Activated T-helper 1 cell treated with anti-CD3 and anti-CD28 coated beads, Interleukin-12 subunit alpha, Interleukin-12 subunit beta, Interleukin-2, Interleukin-4 antibody, amounts not matched to agents 30 ng/mL and 10 ng/mL and 1 ng/mL, durations not matched to agents 14 hours and 24 hours and 36 hours (primary cell): ENCODE measurements at regions of chr2 and their contacts with region 1.

Region 1: DNA sequence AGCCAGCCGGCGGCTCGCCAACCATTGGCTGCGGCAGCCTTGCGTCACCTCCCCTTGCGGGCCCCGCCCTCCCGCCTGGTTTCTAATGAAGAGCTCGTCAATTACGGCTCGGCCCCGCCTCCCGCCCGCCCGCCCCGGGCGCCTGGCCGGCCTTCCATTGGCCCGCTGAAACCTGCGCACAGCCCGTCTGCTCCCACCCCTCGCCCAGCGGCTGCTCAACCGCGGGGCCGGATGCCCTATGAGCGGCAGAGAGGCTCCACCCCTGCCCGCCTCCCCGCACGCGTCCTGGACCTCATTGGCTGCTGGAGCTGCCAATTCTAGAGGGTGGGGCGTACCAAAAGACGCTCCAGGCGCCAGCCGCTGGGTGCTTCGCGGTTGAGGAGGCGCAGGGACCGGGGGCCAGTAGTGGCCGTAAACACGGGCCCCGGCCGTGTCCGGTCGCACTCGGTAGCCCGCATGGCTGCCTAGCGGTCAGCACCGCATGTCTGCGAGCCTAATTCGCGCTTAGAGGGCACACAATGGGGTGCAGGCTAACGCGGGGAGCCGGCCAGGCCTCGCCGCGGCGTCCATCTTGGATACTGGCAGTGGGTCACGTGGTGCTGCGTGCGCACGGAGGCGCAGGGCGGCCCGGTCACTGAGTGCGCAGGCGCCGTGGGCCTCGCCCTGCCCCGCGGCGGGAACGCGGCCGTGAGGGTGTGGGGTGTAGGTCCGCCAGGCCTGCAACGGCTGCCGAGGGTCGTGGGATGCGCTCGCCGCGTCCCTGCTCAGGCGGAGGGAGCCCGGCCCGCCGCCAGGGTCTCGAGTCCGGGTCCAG is 454 bp upstream of the HDAC4 start:
- DNase-seq: peak; percentile 99
- H3K4me3 Mint-ChIP-seq: peak overlapping the region; percentile 94
- H3K27ac Mint-ChIP-seq: peak overlapping the region; percentile 99
- H3K4me1 Mint-ChIP-seq: peaks cover 40% of the 10 kb centered on the region
- H3K27me3 Mint-ChIP-seq: peaks cover 17% of the 10 kb centered on the region

Region 2: GRCh38 chr2:239143858-239144718 is 257.2 kb before region 1 on chr2:
- intact Hi-C with region 1: loop called (anchors 1 kb)
- DNase-seq: no peak
- H3K4me3 Mint-ChIP-seq: no peak overlapping the region
- H3K27ac Mint-ChIP-seq: no peak overlapping the region
- H3K4me1 Mint-ChIP-seq: peaks cover 7% of the 10 kb centered on the region
- H3K27me3 Mint-ChIP-seq: no peaks in the 10 kb centered on the region

Region 3: DNA sequence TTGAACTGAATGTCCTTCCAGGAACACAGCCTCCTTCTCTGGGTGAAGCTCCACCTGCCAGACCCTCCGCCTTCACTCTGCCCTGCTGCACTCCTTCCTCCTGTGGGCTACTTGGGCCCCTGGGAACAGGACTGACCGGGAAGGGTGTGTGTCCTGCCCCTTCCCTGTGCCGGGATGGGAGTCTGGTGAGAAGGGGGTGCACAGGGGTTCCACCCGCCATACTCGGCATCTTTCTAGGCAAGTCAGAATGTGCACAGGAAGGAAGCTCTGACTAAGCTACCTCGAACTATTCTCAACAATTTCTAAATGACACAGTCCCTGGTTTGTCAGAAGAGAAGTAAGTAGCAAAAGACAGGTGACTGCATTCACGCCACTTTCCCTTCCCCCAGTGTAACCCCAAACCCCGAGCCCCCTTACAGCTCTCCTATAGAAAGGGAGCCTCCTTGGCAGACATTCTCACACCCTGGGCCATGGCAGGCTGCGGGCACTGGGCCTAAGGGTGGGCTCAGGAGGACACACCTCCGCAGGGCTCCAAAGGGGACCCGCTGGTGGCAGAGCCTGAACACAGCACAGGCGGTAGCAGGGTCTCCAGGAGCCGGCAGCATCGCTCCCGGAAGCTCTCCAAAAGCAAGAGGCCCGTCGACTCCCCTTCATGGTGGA is 184.5 kb before region 1 on chr2:
- intact Hi-C with region 1: loop called (anchors 2 kb)
- DNase-seq: peak; percentile 34
- H3K4me3 Mint-ChIP-seq: peak overlapping the region; percentile 76
- H3K27ac Mint-ChIP-seq: peak overlapping the region; percentile 69
- H3K4me1 Mint-ChIP-seq: peaks cover 51% of the 10 kb centered on the region
- H3K27me3 Mint-ChIP-seq: no peaks in the 10 kb centered on the region

Region 4: DNA sequence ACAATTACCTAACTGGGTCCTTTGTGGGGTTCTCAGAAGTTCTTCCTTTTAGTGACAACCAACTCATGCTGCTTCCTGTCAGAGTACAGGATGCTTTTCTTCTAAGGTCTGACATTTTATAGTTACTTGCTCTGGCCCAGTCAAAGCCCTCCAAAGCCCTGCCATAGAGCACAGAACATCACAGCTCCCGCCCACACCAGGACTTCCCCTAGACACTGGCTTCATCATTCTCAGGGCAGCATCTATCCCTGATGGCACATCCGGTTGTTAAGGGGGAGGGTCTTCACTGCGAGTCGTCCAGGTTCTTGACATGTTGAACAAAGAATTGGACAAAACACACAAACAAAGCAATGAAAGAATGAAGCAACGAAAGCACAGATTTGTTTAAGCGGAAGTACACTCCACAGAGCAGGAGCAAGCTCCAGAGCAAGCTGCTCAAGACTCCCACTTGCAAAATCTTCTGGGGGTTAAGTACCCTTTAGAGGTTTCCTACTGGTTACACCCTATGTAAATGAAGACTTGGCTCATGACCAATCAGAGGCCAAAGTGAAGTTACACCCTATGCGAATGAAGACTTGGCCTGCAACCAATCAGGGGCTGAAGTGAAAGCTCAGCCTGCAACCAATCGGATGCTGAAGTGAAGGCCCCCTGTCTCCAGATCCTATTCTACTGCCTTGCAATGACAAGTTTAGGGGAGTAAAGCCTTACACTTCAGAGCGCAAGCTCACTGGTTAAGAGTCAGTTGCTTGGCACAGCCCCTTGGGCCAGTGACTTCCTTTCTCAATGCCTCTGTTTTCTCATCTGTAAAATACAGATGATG is 79.5 kb before region 1 on chr2:
- intact Hi-C with region 1: loop called (anchors 1 kb)
- DNase-seq: peak; percentile 73
- H3K4me3 Mint-ChIP-seq: peak overlapping the region; percentile 76
- H3K27ac Mint-ChIP-seq: peak overlapping the region; percentile 97
- H3K4me1 Mint-ChIP-seq: peaks cover 88% of the 10 kb centered on the region
- H3K27me3 Mint-ChIP-seq: no peaks in the 10 kb centered on the region

Region 5: DNA sequence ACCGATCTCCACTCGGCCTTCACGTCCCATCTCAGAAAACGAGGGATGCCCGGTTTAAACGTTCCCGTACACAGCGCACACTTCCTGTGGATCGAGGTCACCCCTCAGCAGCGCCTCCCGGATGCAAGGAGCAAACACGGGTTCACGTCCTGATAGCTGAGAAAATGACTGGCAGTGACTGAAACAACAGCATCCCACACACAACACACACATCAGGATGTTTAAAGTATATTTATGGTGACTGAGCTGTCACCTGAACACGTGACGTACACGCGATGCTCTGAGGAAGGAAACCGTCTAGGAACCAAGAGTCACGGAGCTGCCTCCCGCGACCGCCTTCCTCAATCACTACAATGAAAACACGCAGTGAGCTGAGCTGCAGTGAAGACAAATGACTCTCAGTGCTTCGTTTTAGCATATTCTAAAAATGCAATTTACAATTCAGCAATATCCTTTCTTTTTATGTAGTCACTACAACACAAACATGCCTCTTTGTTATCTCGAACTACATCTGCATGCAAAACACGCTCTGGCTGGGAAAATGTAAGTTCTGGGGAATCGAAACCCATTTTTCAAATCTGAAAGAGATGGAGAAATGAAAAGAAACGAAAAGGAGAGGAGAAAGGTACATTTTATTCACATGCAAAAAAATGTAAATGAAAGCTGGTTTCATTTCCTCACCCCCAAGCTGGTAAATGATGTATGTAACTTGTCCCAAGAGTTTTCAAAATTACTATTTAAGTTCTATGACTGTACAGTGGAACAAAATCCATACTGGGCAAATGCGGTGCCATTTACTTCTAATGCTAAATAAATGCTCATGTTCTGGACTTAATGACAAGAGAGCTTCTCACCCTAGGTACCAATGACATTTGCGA is 20.2 kb before region 1 on chr2:
- intact Hi-C with region 1: loop called (anchors 1 kb)
- DNase-seq: peak; percentile 64
- H3K4me3 Mint-ChIP-seq: peak overlapping the region; percentile 83
- H3K27ac Mint-ChIP-seq: peak overlapping the region; percentile 94
- H3K4me1 Mint-ChIP-seq: peaks cover 38% of the 10 kb centered on the region
- H3K27me3 Mint-ChIP-seq: peaks cover 2% of the 10 kb centered on the region

Region 6: GRCh38 chr2:239498981-239499634 is 97.8 kb after region 1 on chr2:
- intact Hi-C with region 1: no loop called
- DNase-seq: no peak
- H3K4me3 Mint-ChIP-seq: no peak overlapping the region
- H3K27ac Mint-ChIP-seq: no peak overlapping the region
- H3K4me1 Mint-ChIP-seq: no peaks in the 10 kb centered on the region
- H3K27me3 Mint-ChIP-seq: peaks cover 8% of the 10 kb centered on the region

Region 7: GRCh38 chr2:239519089-239519920 is 118.0 kb after region 1 on chr2:
- intact Hi-C with region 1: no loop called
- DNase-seq: no peak
- H3K4me3 Mint-ChIP-seq: no peak overlapping the region
- H3K27ac Mint-ChIP-seq: no peak overlapping the region
- H3K4me1 Mint-ChIP-seq: no peaks in the 10 kb centered on the region
- H3K27me3 Mint-ChIP-seq: peaks cover 7% of the 10 kb centered on the region

Region 8: DNA sequence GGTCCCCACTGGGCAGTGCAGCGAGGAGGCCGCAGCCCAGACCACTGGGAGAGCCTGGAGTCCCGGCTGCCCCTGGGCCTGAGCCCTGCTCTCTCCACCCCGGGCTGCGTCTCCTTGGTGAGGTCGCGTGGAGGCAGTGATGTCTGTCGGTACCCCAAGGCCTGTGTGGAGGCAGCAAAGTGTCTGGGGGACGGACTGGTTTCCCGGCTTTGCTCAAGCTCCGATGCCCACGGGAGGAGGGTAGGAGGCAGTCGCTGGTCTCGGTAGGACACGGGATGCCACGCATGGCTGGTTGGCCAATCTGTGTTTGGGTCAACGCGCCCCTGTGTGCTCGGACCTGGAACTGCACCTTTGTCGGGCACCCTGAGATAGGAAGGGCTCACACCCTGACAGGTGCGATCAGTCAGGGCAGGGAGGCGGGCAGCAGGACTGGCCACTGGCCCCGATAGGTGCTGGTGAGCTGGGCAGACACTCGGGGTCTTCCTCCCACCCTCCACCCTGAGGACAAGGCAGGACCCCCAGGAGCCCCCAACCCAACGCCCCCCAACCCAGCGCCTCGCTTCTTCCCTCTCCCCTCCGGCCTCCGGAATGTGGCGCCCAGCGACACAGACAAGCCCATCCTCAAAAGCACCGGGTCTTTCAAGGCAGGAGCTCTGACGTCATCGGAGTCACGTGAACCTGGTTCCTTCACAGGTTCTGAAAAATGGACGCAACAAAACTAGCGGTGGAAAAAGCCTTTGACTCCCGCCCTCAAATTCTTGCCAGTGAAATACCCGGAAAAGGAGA is 335.3 kb after region 1 on chr2:
- intact Hi-C with region 1: no loop called
- DNase-seq: no peak
- H3K4me3 Mint-ChIP-seq: no peak overlapping the region
- H3K27ac Mint-ChIP-seq: no peak overlapping the region
- H3K4me1 Mint-ChIP-seq: no peaks in the 10 kb centered on the region
- H3K27me3 Mint-ChIP-seq: no peaks in the 10 kb centered on the region

Region 9: DNA sequence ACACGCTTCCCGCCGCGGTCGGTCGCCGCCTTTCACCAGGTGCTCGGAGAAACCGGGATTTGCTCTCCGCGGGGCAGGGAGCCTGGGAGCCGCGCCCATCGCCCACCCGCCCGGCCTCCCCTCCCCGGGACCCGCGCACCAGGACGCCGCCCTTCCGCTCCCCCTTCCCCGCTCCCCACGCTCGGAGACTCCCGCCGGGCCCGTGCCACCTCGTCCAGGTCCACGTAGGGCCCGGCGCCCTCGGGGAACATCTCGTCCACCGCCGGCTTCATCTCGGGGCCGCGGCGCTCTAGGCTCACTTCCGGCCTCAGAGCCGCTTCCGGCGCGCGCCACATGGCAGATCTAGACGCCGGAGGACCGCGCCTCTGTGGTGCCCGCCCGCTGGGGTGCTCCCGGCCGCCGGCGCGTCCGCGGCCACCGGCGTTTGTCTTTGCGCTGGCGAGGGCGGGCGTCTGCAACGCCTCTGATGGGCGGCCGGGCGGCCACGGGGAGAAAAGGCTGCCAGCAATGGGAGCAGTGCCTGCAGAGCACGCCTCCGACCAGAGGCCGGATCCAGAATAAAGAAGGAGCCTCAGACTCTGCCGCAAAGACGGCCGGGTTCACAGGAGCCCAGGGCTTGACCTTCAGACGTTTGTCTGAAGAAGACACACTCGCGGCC is 734.9 kb after region 1 on chr2 and contains the start of gene COPS9:
- intact Hi-C with region 1: loop called (anchors 5 kb)
- DNase-seq: peak; percentile 85
- H3K4me3 Mint-ChIP-seq: peak within 1 kb of the TSS; percentile 92
- H3K27ac Mint-ChIP-seq: peak within 1 kb of the TSS; percentile 84
- H3K4me1 Mint-ChIP-seq: peaks cover 25% of the 10 kb centered on the region
- H3K27me3 Mint-ChIP-seq: peaks cover 6% of the 10 kb centered on the region
- total RNA-seq, gene COPS9: 127 and 132 TPM in 2 replicates